Mammary epithelial cell (primary cell): ENCODE measurements at regions of chr18 and their contacts with region 1.

Region 1: DNA sequence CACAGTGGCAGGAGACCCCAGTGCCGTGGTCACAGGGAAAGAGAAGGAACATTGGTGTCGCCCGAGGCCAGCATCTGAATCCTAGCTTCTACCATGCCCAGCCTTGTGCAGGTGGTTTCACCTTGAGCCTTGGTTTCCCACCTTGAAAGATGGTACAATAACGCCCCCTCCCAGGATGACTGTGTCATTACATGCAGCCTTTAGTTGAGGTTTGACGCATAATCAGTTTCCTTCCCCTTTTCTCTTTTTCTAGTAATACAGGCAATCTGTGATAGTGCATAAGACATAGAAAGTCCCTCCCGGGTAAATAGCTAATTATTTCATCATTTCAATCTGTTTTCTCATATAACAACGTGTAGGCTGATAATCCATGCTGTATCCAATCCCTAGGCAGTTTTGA is 29.8 kb upstream of the ZNF407 start:
- DNase-seq: no peak
- H3K4me3 ChIP-seq: no peak overlapping the region
- H3K27ac ChIP-seq: no peak overlapping the region
- H3K4me1 ChIP-seq: no peaks in the 10 kb centered on the region
- H3K27me3 ChIP-seq: peaks cover 2% of the 10 kb centered on the region
- CTCF ChIP-seq: no peak

Region 2: GRCh38 chr18:74499633-74500032 is 68.2 kb before region 1 on chr18:
- CTCF ChIA-PET with region 1: no interaction called
- dilution Hi-C with region 1: no loop called
- in situ Hi-C with region 1: no loop called
- intact Hi-C with region 1: no loop called
- DNase-seq: peak; percentile 16
- H3K4me3 ChIP-seq: no peak overlapping the region
- H3K27ac ChIP-seq: no peak overlapping the region
- H3K4me1 ChIP-seq: peaks cover 42% of the 10 kb centered on the region
- H3K27me3 ChIP-seq: no peaks in the 10 kb centered on the region
- CTCF ChIP-seq: no peak

Region 3: GRCh38 chr18:74604774-74605173 is 37.0 kb after region 1 on chr18:
- CTCF ChIA-PET with region 1: no interaction called
- dilution Hi-C with region 1: loop called (anchors 5 kb)
- in situ Hi-C with region 1: no loop called
- intact Hi-C with region 1: no loop called
- DNase-seq: no peak
- H3K4me3 ChIP-seq: no peak overlapping the region
- H3K27ac ChIP-seq: no peak overlapping the region
- H3K4me1 ChIP-seq: no peaks in the 10 kb centered on the region
- H3K27me3 ChIP-seq: no peaks in the 10 kb centered on the region
- CTCF ChIP-seq: no peak

Region 4: DNA sequence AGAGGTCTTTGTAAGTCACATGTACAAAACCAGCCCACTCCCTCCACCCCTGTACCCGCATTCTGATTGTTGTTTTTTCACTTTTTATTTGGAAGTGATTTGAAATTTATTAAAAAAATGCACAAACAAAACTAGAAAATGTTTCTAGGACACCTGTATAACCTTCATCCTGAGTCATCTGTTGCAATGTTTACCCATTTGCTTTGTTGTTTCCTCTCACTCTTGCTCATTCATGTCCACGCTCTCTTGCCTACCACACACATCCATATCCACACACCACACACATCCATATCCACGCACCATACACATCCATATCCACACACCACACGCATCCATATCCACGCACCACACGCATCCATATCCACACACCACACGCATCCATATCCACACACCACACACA is 48.7 kb after region 1 on chr18:
- CTCF ChIA-PET with region 1: no interaction called
- dilution Hi-C with region 1: no loop called
- in situ Hi-C with region 1: no loop called
- intact Hi-C with region 1: no loop called
- DNase-seq: no peak
- H3K4me3 ChIP-seq: no peak overlapping the region
- H3K27ac ChIP-seq: no peak overlapping the region
- H3K4me1 ChIP-seq: no peaks in the 10 kb centered on the region
- H3K27me3 ChIP-seq: no peaks in the 10 kb centered on the region
- CTCF ChIP-seq: no peak